HepG2 (cell line): ENCODE measurements at regions of chrX and their contacts with region 1.

Region 1: GRCh38 chrX:110412971-110413721 is 54.5 kb downstream of the RTL9 start:
- DNase-seq: peak; percentile 28
- ATAC-seq: peak; percentile 98
- H3K4me3 ChIP-seq: peak overlapping the region in 1 of 3 experiments; percentile 16; a peak in 1 of 6 replicates
- H3K27ac ChIP-seq: no peak overlapping the region
- H3K4me1 ChIP-seq: no peaks in the 10 kb centered on the region
- H3K27me3 ChIP-seq: no peaks in the 10 kb centered on the region
- CTCF ChIP-seq: peak; percentile 78
- EP300 ChIP-seq: no peak
- POLR2A ChIP-seq: no peak
- RAD21 ChIP-seq: 0 out of 2 replicates have a peak, but pooled peaks have one; percentile 20

Region 2: GRCh38 chrX:109911046-109911445 is 502.1 kb before region 1 on chrX:
- CTCF ChIA-PET with region 1: no interaction called
- POLR2A ChIA-PET with region 1: no interaction called
- in situ Hi-C with region 1: loop called (anchors 25 kb)
- intact Hi-C with region 1: no loop called
- DNase-seq: no peak
- ATAC-seq: no peak
- H3K4me3 ChIP-seq: no peak overlapping the region
- H3K27ac ChIP-seq: no peak overlapping the region
- H3K4me1 ChIP-seq: peaks cover 13% of the 10 kb centered on the region
- H3K27me3 ChIP-seq: no peaks in the 10 kb centered on the region
- CTCF ChIP-seq: peak; percentile 34
- EP300 ChIP-seq: no peak
- POLR2A ChIP-seq: no peak
- RAD21 ChIP-seq: no peak

Region 3: DNA sequence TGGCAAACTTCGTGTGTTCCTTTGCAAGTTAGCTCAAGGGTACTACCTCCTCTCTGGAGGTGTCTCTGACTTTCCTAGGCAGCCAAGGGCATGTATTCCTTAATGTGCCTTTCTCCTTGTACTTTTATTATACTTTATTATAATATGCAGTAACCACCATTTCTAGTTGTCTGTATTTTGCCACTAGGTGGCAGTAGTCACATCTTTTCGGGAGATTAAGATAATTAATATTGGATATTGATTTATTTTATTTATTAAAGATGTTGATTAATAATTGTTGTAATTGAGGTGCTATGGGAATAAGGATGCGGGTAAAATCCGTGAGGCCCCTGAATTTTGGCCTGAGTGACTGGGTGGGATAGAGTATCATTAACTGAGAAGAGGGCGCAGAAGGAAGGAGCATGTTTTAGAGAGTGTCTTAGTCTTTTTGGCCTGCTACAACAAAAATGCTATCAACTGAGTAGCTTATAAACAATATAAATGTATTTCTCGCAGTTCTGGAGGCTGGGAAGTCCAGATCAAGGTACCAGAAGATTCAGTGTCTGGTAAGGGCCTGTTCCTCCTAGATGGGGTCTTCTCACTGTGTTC is 256.9 kb before region 1 on chrX:
- CTCF ChIA-PET with region 1: interaction called, 7 read pairs
- POLR2A ChIA-PET with region 1: no interaction called
- in situ Hi-C with region 1: no loop called
- intact Hi-C with region 1: loop called (anchors 2 kb)
- DNase-seq: no peak
- ATAC-seq: no peak
- H3K4me3 ChIP-seq: no peak overlapping the region
- H3K27ac ChIP-seq: no peak overlapping the region
- H3K4me1 ChIP-seq: no peaks in the 10 kb centered on the region
- H3K27me3 ChIP-seq: no peaks in the 10 kb centered on the region
- CTCF ChIP-seq: no peak; the same call in 1 of the 2 replicates
- EP300 ChIP-seq: no peak
- POLR2A ChIP-seq: no peak
- RAD21 ChIP-seq: no peak

Region 4: DNA sequence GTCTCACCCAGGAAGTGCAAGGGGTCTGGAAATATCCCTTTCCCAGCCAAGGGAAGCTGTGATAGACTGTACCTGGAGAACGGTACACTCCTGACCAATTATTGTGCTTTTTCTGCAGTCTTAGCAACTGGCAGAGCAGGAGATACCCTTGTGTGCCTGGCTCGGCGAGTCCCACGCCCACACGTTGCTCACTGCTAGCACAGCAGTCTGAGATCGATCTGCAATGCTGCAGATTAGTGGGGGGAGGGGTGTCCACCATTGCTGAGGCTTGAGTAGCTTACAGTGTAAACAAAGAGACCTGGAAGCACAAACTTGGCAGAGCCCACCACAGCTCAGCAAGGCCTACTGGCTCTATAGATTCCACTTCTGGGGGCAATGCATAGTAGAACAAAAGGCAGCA is 243.9 kb after region 1 on chrX:
- CTCF ChIA-PET with region 1: no interaction called
- POLR2A ChIA-PET with region 1: no interaction called
- in situ Hi-C with region 1: no loop called
- intact Hi-C with region 1: no loop called
- DNase-seq: no peak
- ATAC-seq: no peak
- H3K4me3 ChIP-seq: no peak overlapping the region
- H3K27ac ChIP-seq: no peak overlapping the region
- H3K4me1 ChIP-seq: no peaks in the 10 kb centered on the region
- H3K27me3 ChIP-seq: no peaks in the 10 kb centered on the region
- CTCF ChIP-seq: no peak
- EP300 ChIP-seq: no peak
- POLR2A ChIP-seq: no peak
- RAD21 ChIP-seq: no peak

Region 5: GRCh38 chrX:110847334-110847733 is 434.2 kb after region 1 on chrX:
- CTCF ChIA-PET with region 1: no interaction called
- POLR2A ChIA-PET with region 1: no interaction called
- in situ Hi-C with region 1: no loop called
- intact Hi-C with region 1: loop called (anchors 2 kb)
- DNase-seq: peak; percentile 32
- ATAC-seq: peak; percentile 64
- H3K4me3 ChIP-seq: no peak overlapping the region
- H3K27ac ChIP-seq: no peak overlapping the region
- H3K4me1 ChIP-seq: no peaks in the 10 kb centered on the region
- H3K27me3 ChIP-seq: no peaks in the 10 kb centered on the region
- CTCF ChIP-seq: peak; percentile 52
- EP300 ChIP-seq: no peak
- POLR2A ChIP-seq: no peak
- RAD21 ChIP-seq: no peak